Naive thymus-derived CD8-positive, alpha-beta T cell (primary cell): ENCODE measurements at regions of chr19 and their contacts with region 1.

Region 1: GRCh38 chr19:39435499-39436349 is at the start of gene RPS16:
- DNase-seq: peak; percentile 97 to 99 (median 98)
- ATAC-seq: peak; percentile 94 to 95
- H3K4me3 Mint-ChIP-seq: peak within 1 kb of the TSS; percentile 95 to 100 (median 100)
- H3K27ac Mint-ChIP-seq: peak within 1 kb of the TSS; percentile 97 to 99 (median 98)
- H3K4me1 Mint-ChIP-seq: peaks cover 21 to 53% (median 40%) of the 10 kb centered on the region in 4 donors
- H3K27me3 Mint-ChIP-seq: peaks cover 0 to 5% (median 0%) of the 10 kb centered on the region in 5 donors
- polyA plus RNA-seq, gene RPS16: 2,588 to 2,812 (median 2,742) TPM

Region 2: DNA sequence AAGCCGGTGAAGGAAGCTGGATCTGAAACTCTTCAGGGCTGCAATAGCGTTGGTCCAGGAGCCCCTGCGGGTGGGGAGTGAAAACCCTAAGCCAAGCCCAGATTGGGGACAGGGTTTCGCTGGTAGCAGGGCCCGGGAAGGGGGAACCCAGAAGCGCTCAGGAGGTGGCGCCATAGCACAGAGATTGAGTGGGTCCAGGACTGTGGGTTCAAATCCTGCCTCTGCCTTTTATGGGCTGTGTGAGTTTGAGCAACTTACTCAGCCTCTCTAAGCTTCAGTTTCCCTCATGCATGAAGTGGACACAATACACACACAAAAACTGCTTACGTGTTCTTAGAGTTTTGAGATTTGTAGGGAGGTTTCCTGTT is 223.4 kb before region 1 on chr19:
- POLR2A ChIA-PET with region 1: no interaction called
- DNase-seq: peak; percentile 29 to 80 (median 52)
- ATAC-seq: peak; percentile 84 to 87
- H3K4me3 Mint-ChIP-seq: no peak overlapping the region
- H3K27ac Mint-ChIP-seq: no peak overlapping the region
- H3K4me1 Mint-ChIP-seq: no peaks in the 10 kb centered on the region
- H3K27me3 Mint-ChIP-seq: peaks cover 4 to 11% (median 7%) of the 10 kb centered on the region in 5 donors

Region 3: DNA sequence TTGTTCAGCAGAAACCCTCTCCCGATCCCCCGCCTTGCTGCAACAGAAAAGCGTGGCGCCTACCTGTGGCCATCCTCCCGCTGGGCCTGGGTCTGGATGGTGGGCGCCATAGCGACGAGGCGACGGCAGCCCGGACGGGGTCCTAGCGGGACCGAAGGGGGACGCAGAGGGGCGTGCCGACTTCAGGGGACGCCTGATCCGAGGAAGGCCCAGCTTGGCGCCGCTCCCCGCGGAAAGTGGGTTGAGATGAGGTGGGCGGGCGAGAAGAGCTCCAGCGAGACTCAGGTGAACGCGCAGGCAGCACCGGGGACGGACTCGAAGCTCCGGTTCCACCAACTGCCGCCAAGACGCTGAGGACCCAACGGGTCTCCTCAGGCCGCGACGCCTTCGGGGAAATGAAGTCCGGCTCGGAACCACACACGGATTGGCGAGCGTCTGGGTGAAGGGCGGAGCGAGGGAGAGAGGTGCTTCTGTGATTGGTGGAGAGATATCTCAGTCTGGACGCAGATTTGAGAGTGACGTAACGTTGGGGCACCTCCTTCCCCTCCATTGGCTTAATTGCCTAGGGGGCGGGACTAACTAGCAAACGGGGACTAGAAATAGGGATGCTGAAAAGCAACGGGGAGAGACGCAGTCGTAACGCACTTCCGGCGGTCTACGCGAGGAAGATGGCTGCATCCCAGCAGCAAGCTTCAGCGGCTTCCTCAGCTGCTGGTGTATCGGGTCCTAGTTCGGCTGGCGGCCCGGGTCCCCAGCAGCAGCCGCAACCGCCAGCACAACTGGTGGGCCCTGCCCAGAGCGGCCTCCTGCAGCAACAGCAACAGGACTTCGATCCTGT is 44.8 kb before region 1 on chr19 and contains the starts of genes MED29 and PAF1:
- POLR2A ChIA-PET with region 1: interaction called, 68 read pairs
- DNase-seq: peak; percentile 86 to 99 (median 97)
- ATAC-seq: peak; percentile 91 to 95
- H3K4me3 Mint-ChIP-seq: peak within 1 kb of the TSS; percentile 95 to 98 (median 98)
- H3K27ac Mint-ChIP-seq: peak within 1 kb of the TSS; percentile 94 to 100 (median 100)
- H3K4me1 Mint-ChIP-seq: peaks cover 15 to 58% (median 50%) of the 10 kb centered on the region in 4 donors
- H3K27me3 Mint-ChIP-seq: no peaks in the 10 kb centered on the region
- polyA plus RNA-seq, gene MED29: 48.1 to 71.4 (median 59.6) TPM
- polyA plus RNA-seq, gene PAF1: 30.7 to 53.0 (median 43.8) TPM

Region 4: GRCh38 chr19:39412100-39412866 is 23.4 kb before region 1 on chr19 and contains the start of gene PLEKHG2:
- POLR2A ChIA-PET with region 1: interaction called, 91 read pairs
- DNase-seq: peak; percentile 91 to 100 (median 98)
- ATAC-seq: peak; percentile 58 to 70
- H3K4me3 Mint-ChIP-seq: peak within 1 kb of the TSS; percentile 79 to 98 (median 89)
- H3K27ac Mint-ChIP-seq: peak within 1 kb of the TSS; percentile 93 to 100 (median 98)
- H3K4me1 Mint-ChIP-seq: peaks cover 39 to 62% (median 42%) of the 10 kb centered on the region in 4 donors
- H3K27me3 Mint-ChIP-seq: peaks cover 0 to 4% (median 0%) of the 10 kb centered on the region in 5 donors
- polyA plus RNA-seq, gene PLEKHG2: 4.2 to 5.0 (median 4.8) TPM

Region 5: DNA sequence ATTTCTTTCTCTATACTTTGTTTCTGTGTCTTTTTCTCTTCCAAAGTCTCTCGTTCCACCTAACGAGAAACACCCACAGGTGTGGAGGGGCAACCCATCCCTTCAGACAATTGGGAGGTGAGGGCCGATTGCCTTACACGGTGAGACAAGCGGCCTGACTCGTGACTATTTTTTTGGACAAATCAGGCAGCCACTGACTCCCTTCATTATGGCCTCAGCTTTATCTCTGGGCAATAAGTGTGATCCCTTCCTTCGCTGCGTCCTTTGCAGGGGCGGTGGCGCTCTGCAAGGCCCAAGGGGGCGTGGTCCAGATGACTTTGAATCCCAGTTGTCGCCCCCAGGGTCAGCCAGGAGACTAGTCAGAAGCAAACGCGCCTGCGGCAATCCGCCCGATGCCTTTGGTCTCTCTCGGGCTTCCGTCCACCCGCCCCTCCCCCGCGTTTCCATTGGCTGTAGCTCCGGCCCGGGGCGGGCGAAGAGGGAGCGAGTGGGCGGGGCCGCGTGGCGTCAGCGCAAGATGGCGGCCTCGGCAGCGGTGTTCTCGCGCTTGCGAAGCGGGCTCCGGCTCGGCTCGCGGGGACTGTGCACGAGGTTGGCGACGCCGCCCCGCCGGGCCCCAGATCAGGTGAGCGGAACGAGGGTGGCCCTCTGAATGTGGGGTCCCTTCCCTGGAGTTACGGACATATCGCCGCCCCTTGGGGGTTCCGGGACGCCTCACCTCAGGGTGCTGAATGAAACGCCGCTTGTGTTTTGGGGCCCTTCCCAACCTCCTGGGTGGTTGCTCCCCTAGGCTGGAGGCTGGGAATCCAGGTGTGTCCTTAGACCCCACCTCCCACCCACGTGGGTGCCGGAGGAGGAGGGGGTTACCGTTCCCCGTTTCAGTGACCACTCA is 44.9 kb after region 1 on chr19 and contains the start of gene TIMM50:
- POLR2A ChIA-PET with region 1: interaction called, 11 read pairs
- DNase-seq: peak; percentile 92 to 99 (median 95)
- ATAC-seq: peak; percentile 96 to 97
- H3K4me3 Mint-ChIP-seq: peak within 1 kb of the TSS; percentile 84 to 94 (median 93)
- H3K27ac Mint-ChIP-seq: peak within 1 kb of the TSS; percentile 85 to 98 (median 95)
- H3K4me1 Mint-ChIP-seq: peaks cover 16 to 33% (median 28%) of the 10 kb centered on the region in 4 donors
- H3K27me3 Mint-ChIP-seq: no peaks in the 10 kb centered on the region
- polyA plus RNA-seq, gene TIMM50: 41.4 to 53.3 (median 44.6) TPM

Region 6: GRCh38 chr19:39544226-39544903 is 108.6 kb after region 1 on chr19:
- POLR2A ChIA-PET with region 1: interaction called, 13 read pairs
- DNase-seq: no peak
- ATAC-seq: peak in 1 of 2 donors; percentile 18
- H3K4me3 Mint-ChIP-seq: peak overlapping the region; percentile 4 to 67 (median 59)
- H3K27ac Mint-ChIP-seq: peak overlapping the region in 9 of 10 donors; percentile 75 to 88 (median 82)
- H3K4me1 Mint-ChIP-seq: peaks cover 25 to 69% (median 57%) of the 10 kb centered on the region in 4 donors
- H3K27me3 Mint-ChIP-seq: peaks cover 0 to 2% (median 0%) of the 10 kb centered on the region in 5 donors

Region 7: GRCh38 chr19:39557441-39558151 is 121.9 kb after region 1 on chr19:
- POLR2A ChIA-PET with region 1: no interaction called
- DNase-seq: no peak
- ATAC-seq: peak; percentile 18 to 30
- H3K4me3 Mint-ChIP-seq: peak overlapping the region; percentile 65 to 80 (median 74)
- H3K27ac Mint-ChIP-seq: peak overlapping the region; percentile 55 to 97 (median 92)
- H3K4me1 Mint-ChIP-seq: peaks cover 14 to 23% (median 22%) of the 10 kb centered on the region in 4 donors
- H3K27me3 Mint-ChIP-seq: peaks cover 0 to 4% (median 0%) of the 10 kb centered on the region in 5 donors